ENCODE measurements at regions of chr6 and their contacts with region 1.

Region 1: DNA sequence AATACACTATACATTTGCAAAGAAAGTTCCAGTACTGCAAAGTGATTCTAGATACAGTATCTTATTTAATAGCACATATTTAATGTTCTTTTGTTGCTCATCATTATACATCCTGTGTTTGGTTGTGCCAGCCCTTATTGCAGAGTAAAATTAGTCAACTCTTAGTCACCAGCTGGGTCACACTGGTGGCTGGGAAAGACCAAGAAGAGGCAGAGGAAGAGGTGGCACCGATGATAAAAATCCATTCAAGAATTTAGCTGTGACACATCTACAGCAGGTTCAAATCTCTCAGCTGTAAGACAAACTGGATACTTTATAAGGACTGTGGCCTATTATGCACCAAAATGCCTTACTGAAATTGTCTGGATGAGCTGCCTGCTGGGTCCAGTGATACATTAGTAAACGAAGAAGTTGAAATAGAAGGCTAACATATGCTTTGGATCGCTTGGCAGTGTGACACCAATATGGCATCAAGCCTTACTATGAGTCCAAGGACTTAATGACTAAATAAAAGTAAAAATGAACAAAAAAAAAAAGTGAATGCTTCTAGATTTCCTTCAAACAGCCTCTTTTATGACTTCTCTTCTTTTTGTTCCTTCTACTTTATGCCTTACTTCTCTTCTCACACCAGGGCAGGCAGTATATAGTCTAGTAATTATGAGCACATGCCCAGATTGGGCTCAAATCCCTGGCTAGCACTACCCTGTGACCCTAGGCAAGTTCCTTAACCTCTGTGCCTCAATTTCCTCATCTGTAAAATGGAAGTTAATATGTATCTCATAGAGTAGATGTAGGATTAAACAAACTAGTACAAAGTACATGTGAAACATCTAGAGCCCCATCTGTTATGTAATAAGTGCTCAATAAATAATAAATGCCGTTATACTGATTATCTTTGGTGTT is 29.4 kb upstream of the RNF8 start:
- DNase-seq: peak; percentile 83
- H3K4me3 ChIP-seq: no peak overlapping the region
- H3K27ac ChIP-seq: peak overlapping the region; percentile 19
- H3K4me1 ChIP-seq: peaks cover 15% of the 10 kb centered on the region
- H3K27me3 ChIP-seq: no peaks in the 10 kb centered on the region
- CTCF ChIP-seq: no peak
- POLR2A ChIP-seq: no peak

Region 2: GRCh38 chr6:37343248-37343647 is 18.9 kb after region 1 on chr6:
- CTCF ChIA-PET with region 1: interaction called, 10 read pairs
- POLR2A ChIA-PET with region 1: interaction called, 6 read pairs
- dilution Hi-C with region 1: no loop called
- intact Hi-C with region 1: no loop called
- DNase-seq: no peak
- H3K4me3 ChIP-seq: no peak overlapping the region
- H3K27ac ChIP-seq: no peak overlapping the region
- H3K4me1 ChIP-seq: no peaks in the 10 kb centered on the region
- H3K27me3 ChIP-seq: peaks cover 2 to 17% of the 10 kb centered on the region in 2 experiments
- CTCF ChIP-seq: no peak
- POLR2A ChIP-seq: no peak

Region 3: DNA sequence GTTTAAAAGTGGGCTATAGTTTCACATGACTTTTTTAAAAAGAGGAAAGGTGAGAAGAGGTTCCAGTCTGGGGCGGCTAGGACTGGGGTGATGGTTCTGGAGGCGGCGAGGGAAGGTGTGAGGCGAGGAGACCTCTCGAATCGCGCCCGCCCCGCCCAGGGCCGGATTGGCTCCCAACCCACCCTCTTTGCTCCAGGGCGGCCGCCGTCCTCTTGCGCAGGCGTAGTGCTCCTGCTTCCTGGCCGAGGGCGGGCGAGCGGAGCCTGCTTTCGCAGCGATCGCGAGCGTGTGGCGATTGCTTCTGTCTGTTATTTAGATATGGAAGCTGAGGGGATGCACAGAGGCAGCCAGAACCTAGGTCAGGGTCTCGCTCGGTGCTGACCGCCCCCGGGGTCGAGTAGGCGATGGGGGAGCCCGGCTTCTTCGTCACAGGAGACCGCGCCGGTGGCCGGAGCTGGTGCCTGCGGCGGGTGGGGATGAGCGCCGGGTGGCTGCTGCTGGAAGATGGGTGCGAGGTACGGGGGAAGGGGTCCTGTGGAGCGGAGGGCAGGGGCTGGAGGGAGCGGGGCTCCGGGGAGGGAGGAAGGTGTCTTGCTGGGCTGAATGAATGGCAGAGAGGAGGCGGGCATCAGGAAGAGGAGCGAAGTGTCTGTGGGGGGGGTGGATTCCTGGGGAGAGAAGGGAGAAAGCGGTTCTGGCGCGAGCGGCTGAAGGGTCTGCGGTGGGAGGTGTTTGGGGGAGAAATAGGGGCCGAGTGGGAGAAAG is 29.6 kb after region 1 on chr6 and contains the start of gene RNF8:
- CTCF ChIA-PET with region 1: interaction called, 8 read pairs
- POLR2A ChIA-PET with region 1: no interaction called
- dilution Hi-C with region 1: no loop called
- intact Hi-C with region 1: loop called (anchors 2 kb)
- DNase-seq: peak; percentile 92
- H3K4me3 ChIP-seq: peak within 1 kb of the TSS; percentile 56 to 99 (median 64)
- H3K27ac ChIP-seq: no peak within 1 kb of the TSS
- H3K4me1 ChIP-seq: peaks cover 27% of the 10 kb centered on the region
- H3K27me3 ChIP-seq: no peaks in the 10 kb centered on the region
- CTCF ChIP-seq: no peak
- POLR2A ChIP-seq: peak; percentile 76
- total RNA-seq, gene RNF8: 26.2 and 27.3 TPM in 2 replicates

Region 4: DNA sequence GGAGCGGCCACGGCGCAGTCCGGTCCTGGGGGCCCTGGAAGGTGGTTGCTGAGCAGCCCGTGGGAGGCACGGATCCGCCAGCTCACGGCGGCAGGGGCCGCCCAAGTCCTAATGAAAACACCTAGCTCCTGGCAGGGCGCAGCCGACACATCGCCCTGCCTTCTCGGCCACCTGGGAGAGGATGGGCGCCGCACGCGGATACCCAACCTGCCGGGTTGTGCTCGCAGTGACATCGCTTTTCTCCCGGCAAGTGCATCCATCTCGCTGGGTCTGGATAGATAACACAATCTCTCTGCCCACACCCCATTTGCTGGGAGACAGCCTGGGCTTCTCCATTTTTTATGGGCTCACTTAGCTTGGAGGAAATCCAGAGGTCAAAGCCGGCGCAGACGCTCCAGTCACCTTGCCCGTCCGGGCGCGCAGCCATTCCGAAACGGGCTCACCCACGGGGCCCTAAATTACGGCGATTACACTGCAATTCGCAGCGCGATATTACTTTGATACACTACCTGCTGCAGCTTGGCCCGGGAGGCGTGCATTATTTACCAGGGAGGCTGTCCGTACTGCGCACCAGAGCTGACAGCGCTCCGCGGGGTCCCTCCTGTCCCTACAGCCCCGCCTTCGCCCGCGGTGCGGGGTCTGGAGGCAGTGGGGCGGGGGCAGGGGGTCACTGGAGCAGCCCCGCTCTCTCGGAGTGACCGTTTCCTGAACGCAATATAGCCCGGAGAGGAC is 211.5 kb after region 1 on chr6:
- CTCF ChIA-PET with region 1: no interaction called
- POLR2A ChIA-PET with region 1: no interaction called
- dilution Hi-C with region 1: no loop called
- intact Hi-C with region 1: no loop called
- DNase-seq: no peak
- H3K4me3 ChIP-seq: no peak overlapping the region
- H3K27ac ChIP-seq: no peak overlapping the region
- H3K4me1 ChIP-seq: peaks cover 7% of the 10 kb centered on the region
- H3K27me3 ChIP-seq: peaks cover 64 to 67% of the 10 kb centered on the region in 2 experiments
- CTCF ChIP-seq: no peak
- POLR2A ChIP-seq: no peak

Region 5: DNA sequence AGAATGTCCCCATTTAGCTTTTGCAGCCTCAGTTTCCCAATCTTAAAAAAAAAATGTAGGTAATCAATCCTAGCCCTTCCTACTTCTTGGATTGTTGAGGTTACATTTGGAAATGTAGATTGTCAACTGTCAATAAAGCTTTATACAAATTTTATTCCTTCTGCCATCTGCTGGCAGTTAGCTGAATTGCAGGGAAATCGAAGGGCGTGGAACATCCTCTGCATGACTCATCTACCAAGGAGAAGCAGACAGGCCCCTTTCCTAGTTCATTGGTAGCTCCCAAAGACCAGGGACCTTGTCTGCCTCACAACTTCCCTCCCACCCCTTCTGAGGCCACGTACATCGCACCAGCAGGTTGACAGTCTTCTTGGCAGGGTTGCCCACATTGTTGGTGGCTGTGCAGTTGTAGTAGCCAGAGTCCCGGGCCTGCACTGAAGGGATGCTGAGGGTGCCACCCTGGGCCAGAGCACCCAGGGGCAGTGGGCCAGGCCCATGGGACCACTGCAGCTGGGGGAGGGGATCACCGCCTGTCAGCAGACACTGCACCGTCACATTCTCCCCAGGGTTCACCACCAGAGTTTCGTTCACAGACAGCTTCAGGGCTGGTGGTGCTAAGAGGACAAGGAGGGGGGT is 329.7 kb after region 1 on chr6:
- CTCF ChIA-PET with region 1: no interaction called
- POLR2A ChIA-PET with region 1: no interaction called
- dilution Hi-C with region 1: no loop called
- intact Hi-C with region 1: no loop called
- DNase-seq: peak; percentile 47
- H3K4me3 ChIP-seq: no peak overlapping the region
- H3K27ac ChIP-seq: no peak overlapping the region
- H3K4me1 ChIP-seq: no peaks in the 10 kb centered on the region
- H3K27me3 ChIP-seq: peaks cover 8 to 22% of the 10 kb centered on the region in 2 experiments
- CTCF ChIP-seq: peak; percentile 54 to 77
- POLR2A ChIP-seq: no peak

Region 6: DNA sequence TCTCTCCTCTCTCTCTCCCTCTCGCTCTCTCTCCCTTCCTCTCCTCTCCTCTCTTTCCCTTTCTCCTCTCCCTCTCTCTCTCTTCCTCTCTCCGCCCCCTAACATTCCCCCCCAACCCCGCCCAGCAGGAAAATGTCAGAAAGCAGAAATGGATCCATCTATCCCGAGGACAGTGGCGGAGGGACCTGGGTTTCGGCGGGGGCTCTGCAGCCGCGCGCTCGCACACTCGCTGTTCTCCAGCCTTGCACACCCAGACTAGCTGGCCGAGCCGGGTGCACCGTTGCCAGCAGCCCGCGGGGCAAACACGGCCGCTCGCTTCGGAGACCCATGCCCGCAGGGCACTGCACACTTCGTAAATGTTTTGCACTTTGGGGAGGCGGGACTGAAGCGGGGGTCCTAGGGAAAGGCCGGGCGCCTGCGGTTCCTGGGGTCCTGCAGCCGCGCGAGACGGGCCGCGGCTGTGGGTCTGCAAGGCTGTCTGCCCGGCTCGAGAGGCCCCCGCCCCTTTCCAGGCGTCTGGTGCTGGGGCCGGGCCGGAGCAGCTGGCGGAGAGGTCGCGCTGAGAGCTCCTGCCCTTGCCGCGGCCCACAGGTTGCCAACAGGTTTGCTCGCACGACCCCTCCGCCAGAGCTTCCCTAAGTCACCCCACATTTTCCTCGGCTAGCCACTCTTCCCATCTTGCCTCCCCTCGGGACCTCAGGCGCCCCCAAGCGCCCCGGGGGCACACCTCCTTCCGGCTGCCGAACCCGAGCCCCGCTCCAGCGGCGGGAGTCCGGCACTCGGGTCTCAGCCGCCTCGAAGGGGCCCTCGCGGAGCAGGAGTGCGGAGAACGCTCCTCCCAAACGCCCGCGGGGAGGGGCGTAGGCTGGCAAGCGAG is 374.1 kb after region 1 on chr6:
- CTCF ChIA-PET with region 1: no interaction called
- POLR2A ChIA-PET with region 1: no interaction called
- dilution Hi-C with region 1: no loop called
- intact Hi-C with region 1: loop called (anchors 1 kb)
- DNase-seq: peak; percentile 53
- H3K4me3 ChIP-seq: peak overlapping the region; percentile 55 to 85 (median 77)
- H3K27ac ChIP-seq: no peak overlapping the region
- H3K4me1 ChIP-seq: peaks cover 16% of the 10 kb centered on the region
- H3K27me3 ChIP-seq: peaks cover 33 to 50% of the 10 kb centered on the region in 2 experiments
- CTCF ChIP-seq: no peak
- POLR2A ChIP-seq: no peak

Measured in endothelial cell of umbilical vein (primary cell).